Left ventricle myocardium inferior (tissue), 1 donor: ENCODE measurements at regions of chr9 and their contacts with region 1.

Region 1: DNA sequence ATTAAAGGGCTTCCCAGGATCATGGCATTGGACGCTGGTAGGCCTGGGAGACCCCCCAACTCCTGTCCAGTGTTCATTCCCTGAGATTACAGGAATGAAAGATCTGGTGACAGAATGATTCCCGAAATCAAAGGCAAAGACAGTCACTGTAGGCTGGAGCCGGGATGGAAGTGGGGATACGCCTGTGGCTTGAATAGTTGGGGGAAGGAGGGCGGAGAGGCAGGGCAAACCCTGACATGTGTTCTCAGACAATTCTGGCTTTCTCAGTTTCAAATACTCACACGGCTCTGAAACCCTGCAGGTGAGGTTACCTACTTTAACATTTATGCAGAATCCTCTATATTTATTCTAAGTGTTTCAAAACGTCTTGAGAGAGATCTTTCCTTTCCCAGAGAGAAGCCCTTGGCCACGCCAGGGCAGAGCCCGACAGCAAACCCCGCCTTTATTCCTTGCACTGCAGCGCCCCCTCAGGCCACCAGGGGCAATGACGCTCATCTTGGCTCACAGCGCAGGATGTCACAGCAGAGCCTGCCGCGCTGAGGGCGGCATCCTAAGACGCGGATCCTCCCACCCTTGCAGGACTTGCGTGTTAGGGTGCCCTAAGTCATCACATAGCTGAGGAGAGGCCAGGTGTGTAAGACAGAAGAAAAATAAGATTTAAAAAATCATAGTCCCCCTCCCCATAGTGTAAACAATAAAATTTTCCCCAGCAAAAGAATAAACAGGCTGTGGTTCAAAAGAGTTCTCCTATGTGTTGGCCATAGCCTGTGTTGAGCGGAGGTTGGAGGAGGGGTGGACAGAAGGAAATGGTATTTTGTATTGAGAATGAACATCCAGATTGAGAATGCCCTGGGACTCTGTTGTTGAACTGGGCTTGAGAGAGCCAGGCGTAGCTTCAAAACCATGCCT is 284.5 kb downstream of the NTRK2 start:
- DNase-seq: peak; percentile 77
- H3K4me3 ChIP-seq: no peak overlapping the region
- H3K27ac ChIP-seq: no peak overlapping the region
- H3K4me1 ChIP-seq: peaks cover 28% of the 10 kb centered on the region
- H3K27me3 ChIP-seq: peaks cover 20% of the 10 kb centered on the region
- CTCF ChIP-seq: peak; percentile 98

Region 2: DNA sequence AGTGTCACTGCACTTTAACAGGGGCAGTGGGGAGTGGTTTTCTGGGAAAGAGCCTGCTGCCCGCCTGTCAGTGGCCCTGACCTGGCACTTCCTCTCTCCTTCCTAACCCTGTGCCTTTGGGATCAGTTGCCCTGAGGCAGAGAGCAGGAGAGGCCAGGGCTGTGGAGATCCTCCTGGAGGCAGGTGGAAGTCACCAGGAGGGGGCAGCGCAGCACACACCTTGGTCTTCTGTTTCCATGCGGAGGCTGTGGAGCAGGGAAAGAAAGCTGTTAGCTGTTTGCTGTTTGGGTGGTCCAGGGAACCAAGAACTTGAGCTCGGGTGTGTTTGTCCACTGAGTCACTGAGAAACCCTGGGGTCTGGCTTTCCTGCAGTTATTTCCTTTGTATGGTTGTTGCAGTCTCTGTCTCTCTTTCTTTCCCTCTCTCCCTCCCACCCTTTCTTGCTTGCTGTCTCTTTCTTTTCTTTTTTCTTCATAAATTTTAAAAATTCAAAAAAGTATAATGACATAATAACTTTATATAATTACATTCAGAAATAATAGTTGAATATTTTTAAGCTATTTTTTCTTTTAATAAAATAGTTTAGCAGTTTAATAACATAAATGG is 256.4 kb before region 1 on chr9:
- intact Hi-C with region 1: loop called (anchors 10 kb)
- DNase-seq: peak; percentile 72
- H3K4me3 ChIP-seq: no peak overlapping the region
- H3K27ac ChIP-seq: no peak overlapping the region
- H3K4me1 ChIP-seq: no peaks in the 10 kb centered on the region
- H3K27me3 ChIP-seq: peaks cover 21% of the 10 kb centered on the region
- CTCF ChIP-seq: peak; percentile 81